Activated naive CD4-positive, alpha-beta T cell treated with anti-CD3 and anti-CD28 coated beads for 36 hours (primary cell): ENCODE measurements at regions of chr6 and their contacts with region 1.

Region 1: DNA sequence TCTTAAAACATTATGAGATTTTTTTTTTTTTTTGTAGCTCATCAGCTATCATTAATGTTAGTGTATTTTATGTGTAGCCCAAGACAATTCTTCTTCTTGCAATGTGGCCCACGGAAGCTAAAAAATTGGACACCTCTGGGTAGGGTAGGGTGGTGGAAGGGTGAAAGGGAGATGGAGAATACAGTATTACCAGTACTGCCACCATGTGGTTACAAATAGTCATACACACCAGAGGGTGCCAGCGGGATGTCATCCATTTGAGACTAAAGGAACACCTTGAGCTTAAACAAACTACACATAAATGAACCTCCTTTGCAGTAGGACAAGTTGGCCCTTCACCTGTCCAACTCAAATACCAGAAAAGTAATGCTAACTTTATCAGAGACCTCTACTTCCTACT is 601.9 kb downstream of the HTR1B start:
- DNase-seq: peak; percentile 5
- H3K4me3 Mint-ChIP-seq: no peak overlapping the region
- H3K27ac Mint-ChIP-seq: no peak overlapping the region
- H3K4me1 Mint-ChIP-seq: no peaks in the 10 kb centered on the region
- H3K27me3 Mint-ChIP-seq: no peaks in the 10 kb centered on the region

Region 2: DNA sequence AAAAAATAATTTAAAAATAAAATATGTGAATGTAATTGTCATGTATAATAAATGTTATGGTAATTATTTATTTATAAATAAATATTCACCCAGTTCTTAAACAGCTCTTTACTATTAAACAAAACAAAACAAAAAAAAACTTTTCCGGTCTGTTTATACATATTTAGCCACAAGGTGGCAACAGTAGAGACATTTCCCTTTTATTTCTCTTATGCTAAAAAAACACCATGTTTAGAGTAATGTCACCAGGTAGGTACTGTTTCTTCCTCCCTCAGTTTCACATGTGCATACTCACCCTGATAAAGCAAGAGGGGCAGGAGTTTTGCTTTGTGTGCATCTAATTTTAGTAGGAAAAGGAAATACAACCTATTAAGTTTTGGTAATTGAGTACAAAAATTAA is 178.6 kb before region 1 on chr6:
- CTCF ChIA-PET with region 1: no interaction called
- intact Hi-C with region 1: loop called (anchors 10 kb)
- DNase-seq: no peak
- H3K4me3 Mint-ChIP-seq: no peak overlapping the region
- H3K27ac Mint-ChIP-seq: no peak overlapping the region
- H3K4me1 Mint-ChIP-seq: no peaks in the 10 kb centered on the region
- H3K27me3 Mint-ChIP-seq: no peaks in the 10 kb centered on the region

Region 3: DNA sequence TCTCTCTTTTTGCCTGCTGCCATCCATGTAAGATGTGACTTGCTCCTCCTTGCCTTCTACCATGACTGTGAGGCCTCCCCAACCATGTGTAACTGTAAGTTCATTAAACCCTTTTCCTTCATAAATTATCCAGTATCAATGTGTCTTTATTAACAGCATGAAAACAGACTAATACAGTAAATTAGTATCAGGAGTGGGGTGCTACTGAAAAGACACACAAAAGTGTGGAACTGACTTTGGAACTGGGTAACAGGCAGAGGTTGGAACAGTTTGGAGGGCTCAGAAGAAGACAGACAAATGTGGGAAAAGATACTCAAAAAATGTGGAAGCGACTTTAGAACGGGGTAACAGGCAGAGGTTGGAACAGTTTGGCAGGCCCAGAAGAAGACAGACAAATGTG is 412.5 kb after region 1 on chr6:
- CTCF ChIA-PET with region 1: no interaction called
- intact Hi-C with region 1: no loop called
- DNase-seq: no peak
- H3K4me3 Mint-ChIP-seq: no peak overlapping the region
- H3K27ac Mint-ChIP-seq: no peak overlapping the region
- H3K4me1 Mint-ChIP-seq: no peaks in the 10 kb centered on the region
- H3K27me3 Mint-ChIP-seq: no peaks in the 10 kb centered on the region